GM10248 (cell line): ENCODE measurements at regions of chr19 and their contacts with region 1.

Region 1: DNA sequence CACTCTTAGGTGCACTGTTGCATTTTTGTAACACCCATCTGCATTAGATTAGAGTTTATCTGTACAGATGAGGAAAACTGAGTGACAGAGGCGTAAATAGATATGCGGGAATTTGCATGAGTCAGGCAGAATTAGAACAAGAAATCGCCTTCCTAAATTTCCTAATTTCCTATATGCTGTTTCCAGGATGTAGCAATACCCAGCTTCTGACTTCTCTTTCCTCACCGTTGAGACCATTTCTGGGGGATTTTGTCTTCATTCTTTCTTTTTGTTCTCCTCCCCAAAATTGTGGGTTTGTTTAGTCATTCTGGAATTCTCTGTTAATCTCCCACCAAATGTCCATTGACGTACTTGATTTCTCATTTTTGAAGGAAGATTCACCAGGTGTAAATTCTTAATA is 10.6 kb upstream of the ZNF792 start:
- DNase-seq: no peak
- CTCF ChIP-seq: no peak

Region 2: DNA sequence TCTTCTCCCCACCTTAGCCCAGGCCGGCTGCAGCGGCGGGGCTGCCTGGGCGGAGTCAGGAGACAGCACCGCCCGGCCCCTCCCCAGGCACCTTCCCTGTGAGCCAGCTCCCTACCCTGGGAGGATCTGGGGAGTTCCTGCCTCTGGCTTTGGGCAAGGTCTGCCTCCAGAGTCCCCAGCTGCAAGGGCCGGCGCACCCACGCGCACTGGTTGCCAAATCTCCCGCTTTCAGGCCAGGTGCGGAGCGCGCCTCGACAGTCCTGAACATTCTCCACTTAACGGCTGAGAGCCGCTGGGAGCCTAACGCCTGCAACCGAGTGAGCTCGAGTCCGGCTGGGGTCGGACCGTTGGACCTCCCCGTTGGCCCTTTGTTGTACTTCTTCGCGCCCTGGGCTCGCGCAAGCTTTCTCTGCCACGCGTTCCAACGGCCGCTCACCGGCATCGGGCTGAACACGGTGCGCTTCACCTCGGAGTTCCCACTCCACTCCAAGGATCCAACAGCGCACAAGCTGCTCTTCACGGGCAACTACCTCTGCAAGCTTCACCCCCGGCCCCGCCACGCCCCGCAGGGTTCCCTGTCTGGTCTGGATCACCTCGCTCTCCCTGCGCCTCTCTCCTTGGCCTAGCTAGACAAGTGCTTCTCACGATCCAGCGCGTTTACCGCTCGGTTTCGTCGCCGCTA is 69.7 kb before region 1 on chr19:
- CTCF ChIA-PET with region 1: no interaction called
- POLR2A ChIA-PET with region 1: no interaction called
- DNase-seq: no peak
- CTCF ChIP-seq: no peak

Region 3: GRCh38 chr19:34943861-34944573 is 30.6 kb before region 1 on chr19:
- CTCF ChIA-PET with region 1: no interaction called
- POLR2A ChIA-PET with region 1: no interaction called
- DNase-seq: no peak
- CTCF ChIP-seq: no peak

Region 4: DNA sequence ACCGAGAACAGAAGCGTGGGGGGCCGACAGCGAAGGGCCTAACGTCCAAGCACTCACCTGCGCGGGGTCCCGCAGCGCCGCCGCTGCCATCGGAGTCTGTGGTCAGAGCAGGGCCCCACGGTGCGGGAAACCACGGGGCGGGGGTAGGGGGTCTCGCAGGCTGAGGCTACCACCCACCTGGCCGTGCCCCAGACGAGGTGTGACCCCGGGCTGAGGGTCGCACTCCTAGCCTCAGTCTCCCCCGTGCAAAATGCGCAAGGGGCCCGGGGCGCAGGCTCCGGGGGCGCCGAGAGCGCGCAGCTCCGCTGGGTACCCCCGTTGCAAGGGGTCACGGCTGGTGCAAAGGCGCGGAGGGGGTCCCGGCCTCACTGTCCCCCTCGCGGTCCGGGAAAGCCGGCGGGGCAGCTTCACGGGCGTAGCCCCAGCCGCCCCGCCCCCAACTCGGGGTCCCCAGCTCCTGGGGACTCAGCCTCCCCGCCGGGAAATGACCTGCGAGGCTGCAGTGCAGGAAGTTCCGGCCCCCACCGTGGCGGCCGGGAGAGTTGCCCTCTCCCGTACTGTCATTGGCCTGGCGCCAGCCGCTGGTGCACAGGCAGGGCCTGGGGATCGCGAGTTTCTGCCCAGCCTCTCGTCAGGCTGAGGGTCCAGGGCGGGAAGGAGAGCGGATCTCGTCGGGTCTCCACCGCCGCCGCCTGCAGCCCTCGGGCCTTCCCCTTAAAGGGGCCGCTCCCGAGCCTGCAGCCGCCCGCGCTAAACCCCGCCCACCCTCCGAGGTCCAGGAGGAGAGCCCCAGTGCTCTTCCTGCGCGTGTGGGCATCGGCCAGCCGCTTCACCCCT is 10.9 kb before region 1 on chr19 and contains the start of gene ZNF792:
- CTCF ChIA-PET with region 1: interaction called, 21 read pairs
- POLR2A ChIA-PET with region 1: no interaction called
- DNase-seq: peak; percentile 84
- CTCF ChIP-seq: no peak

Region 5: GRCh38 chr19:34985249-34986022 is 10.8 kb after region 1 on chr19:
- CTCF ChIA-PET with region 1: interaction called, 19 read pairs
- POLR2A ChIA-PET with region 1: no interaction called
- DNase-seq: no peak
- CTCF ChIP-seq: no peak

Region 6: DNA sequence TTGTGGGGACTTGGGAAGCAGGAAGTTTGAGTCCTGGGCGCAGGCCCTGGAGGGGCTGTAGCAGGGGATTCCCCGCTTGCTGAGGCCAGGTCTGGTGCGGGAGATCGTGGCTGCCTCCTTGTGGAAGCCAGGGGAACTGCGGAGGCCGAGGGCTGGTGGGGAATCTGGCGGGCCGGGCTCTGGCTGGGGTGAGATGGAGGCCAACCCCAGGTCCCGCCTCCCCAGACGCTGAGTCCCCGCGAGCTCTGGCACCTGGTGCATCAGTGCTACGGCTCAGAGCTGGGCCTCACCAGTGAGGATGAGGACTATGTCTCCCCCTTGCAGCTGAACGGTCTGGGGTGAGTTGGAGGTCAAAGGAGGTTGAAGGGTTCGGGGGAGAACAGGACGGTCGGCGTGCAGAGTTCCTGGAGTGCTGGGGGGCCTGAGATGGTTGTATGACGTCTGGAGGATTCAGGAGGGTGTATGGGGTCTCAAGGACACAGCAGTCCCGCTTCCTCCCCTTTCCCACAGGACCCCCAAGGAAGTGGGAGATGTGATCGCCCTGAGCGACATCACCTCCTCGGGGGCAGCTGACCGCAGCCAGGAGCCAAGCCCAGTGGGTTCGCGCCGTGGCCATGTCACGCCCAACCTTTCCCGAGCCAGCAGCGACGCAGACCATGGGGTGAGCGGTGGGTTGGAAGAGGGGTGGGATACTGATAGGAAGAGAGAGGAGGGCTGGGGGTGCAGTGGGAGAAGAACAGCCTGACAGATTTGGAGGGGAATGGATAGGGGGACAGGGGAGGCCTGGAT is 38.6 kb after region 1 on chr19:
- CTCF ChIA-PET with region 1: interaction called, 120 read pairs
- POLR2A ChIA-PET with region 1: no interaction called
- DNase-seq: peak; percentile 88
- CTCF ChIP-seq: peak; percentile 94

Region 7: DNA sequence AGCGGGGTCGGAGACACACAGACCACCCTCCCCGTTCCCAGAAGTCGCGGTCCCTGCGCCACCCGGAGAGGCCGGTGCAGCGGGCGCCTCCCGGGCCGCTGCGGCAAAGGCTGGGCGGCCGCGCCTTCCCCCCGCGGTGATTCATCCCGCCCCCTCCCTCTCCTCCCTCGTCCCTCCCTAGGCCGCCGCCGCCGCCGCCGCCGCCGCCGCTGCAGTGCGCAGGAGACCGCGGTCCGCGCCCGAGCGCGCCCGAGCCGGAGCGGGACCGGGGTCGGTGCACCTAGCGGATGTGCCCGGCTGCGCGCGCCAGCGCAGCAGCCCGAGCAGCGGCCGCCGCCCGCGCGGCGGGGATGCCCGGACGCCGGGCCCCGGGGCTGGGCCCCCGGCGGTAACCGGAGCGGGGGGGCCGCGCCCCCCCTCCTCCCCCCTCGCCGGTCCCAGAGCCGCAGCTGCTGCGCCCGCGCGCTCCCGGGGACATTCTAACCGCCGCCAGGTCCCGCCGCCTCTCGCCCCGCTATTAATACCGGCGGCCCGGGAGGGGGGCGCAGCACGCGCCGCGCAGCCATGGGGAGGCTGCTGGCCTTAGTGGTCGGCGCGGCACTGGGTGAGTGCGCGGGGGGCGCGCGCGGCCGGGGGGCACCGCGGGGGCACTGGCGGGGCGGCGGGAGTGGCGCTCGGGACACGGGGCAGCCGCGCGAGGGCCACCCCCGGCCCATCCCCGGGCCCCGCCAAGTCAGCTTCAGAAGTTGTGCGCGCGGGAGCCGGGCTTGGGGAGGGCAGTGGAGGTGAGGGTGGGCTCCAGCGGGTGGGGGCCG is 55.8 kb after region 1 on chr19 and contains the start of gene SCN1B:
- CTCF ChIA-PET with region 1: no interaction called
- POLR2A ChIA-PET with region 1: no interaction called
- DNase-seq: peak; percentile 54
- CTCF ChIP-seq: no peak